Activated T-helper 1 cell treated with anti-CD3 and anti-CD28 coated beads, Interleukin-12 subunit alpha, Interleukin-12 subunit beta, Interleukin-2, Interleukin-4 antibody, amounts not matched to agents 30 ng/mL and 10 ng/mL and 1 ng/mL, durations not matched to agents 14 hours and 24 hours and 36 hours (primary cell): ENCODE measurements at regions of chr19 and their contacts with region 1.

Region 1: GRCh38 chr19:58305065-58305931 is at the start of gene ERVK3-1:
- DNase-seq: peak; percentile 95
- H3K4me3 Mint-ChIP-seq: peak within 1 kb of the TSS; percentile 97
- H3K27ac Mint-ChIP-seq: peak within 1 kb of the TSS; percentile 96
- H3K4me1 Mint-ChIP-seq: peaks cover 43% of the 10 kb centered on the region
- H3K27me3 Mint-ChIP-seq: no peaks in the 10 kb centered on the region
- total RNA-seq, gene ERVK3-1: 87.1 and 96.7 TPM in 2 replicates

Region 2: DNA sequence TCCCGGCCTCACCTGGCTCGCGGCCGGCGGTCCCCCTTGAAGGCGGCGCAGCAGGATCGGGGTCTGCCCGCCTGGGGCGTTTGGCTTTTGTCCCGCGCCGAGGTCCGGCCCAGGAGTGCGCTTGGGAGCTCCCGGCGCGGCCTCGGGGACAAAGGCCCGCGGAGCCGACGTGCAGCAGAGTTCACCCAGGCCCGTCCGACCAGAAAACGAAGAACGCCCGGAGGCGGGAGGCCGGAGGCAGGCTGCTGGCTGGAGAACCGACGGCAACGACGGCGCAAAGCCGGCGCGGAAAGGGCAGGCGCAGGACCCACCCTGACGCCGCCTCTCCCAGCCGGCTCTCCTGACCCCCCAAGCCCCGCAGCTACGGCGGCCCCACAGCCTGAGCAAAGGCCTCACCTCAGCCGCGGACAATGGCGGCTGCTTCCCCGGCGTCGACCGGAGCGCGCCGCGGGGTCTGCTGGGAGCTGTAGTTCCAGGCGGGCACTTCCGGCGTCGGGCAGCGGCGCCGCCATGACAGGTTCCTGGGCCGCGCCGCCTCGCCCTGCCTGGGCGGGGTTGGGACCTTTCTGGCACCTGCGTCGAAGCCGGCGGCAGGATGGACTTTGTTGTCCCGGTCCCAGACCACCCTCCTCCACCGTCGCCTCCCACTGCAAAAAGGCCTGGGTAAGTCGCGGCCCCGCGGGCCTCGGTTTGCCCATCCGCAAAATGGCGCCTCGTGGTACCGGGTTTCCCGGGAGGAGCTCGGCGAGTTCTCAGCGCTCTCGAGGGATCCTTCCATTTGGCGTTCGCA is 302.7 kb before region 1 on chr19 and contains the start of gene ZNF606:
- intact Hi-C with region 1: loop called (anchors 10 kb)
- DNase-seq: peak; percentile 80
- H3K4me3 Mint-ChIP-seq: peak within 1 kb of the TSS; percentile 84
- H3K27ac Mint-ChIP-seq: peak within 1 kb of the TSS; percentile 67
- H3K4me1 Mint-ChIP-seq: peaks cover 20% of the 10 kb centered on the region
- H3K27me3 Mint-ChIP-seq: no peaks in the 10 kb centered on the region
- total RNA-seq, gene ZNF606: 6.3 and 6.4 TPM in 2 replicates

Region 3: GRCh38 chr19:58326914-58327726 is 21.8 kb after region 1 on chr19 and contains the start of gene ZSCAN22:
- intact Hi-C with region 1: loop called (anchors 1 kb)
- DNase-seq: peak; percentile 88
- H3K4me3 Mint-ChIP-seq: no peak within 1 kb of the TSS
- H3K27ac Mint-ChIP-seq: no peak within 1 kb of the TSS
- H3K4me1 Mint-ChIP-seq: peaks cover 9% of the 10 kb centered on the region
- H3K27me3 Mint-ChIP-seq: no peaks in the 10 kb centered on the region
- total RNA-seq, gene ZSCAN22: 4.7 and 4.8 TPM in 2 replicates

Region 4: DNA sequence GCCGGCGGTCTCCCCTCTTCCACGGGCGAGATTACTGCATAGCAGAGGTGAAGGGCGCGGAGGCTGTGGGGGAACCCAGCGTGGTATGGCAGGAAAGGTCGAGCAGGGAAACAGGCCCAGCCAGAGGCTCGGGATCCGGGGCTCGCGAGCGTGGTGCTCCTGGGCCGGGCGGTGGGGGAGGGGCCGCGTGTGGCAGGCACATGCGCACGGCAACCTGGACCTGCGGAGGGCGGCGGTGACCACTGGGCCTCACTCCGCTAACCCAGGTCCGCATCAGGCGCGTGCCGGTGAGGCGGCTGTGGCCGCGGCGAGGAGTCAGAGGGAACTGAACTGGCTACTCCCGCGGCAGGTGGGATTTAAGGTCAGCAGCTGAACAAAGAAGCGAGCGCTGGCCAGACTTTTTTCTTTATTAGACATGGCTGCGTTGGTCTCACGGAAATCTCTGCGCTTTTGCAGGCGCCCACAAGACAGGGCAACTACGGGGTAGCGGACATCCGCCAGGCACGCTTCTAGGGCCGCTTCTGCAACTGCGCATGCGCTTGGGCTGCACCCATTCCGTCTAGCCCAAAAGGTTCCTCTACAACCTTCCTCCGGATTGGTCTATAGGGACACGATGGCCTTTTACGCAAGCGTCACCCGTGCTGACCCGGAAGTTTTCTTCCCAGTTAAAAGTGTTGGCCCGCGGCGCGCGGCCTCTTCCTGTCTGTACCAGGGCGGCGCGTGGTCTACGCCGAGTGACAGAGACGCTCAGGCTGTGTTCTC is 81.5 kb after region 1 on chr19 and contains the start of gene RPS5:
- intact Hi-C with region 1: loop called (anchors 1 kb)
- DNase-seq: peak; percentile 95
- H3K4me3 Mint-ChIP-seq: peak within 1 kb of the TSS; percentile 93
- H3K27ac Mint-ChIP-seq: peak within 1 kb of the TSS; percentile 99
- H3K4me1 Mint-ChIP-seq: peaks cover 35% of the 10 kb centered on the region
- H3K27me3 Mint-ChIP-seq: no peaks in the 10 kb centered on the region
- total RNA-seq, gene RPS5: 1,157 and 1,161 TPM in 2 replicates

Region 5: DNA sequence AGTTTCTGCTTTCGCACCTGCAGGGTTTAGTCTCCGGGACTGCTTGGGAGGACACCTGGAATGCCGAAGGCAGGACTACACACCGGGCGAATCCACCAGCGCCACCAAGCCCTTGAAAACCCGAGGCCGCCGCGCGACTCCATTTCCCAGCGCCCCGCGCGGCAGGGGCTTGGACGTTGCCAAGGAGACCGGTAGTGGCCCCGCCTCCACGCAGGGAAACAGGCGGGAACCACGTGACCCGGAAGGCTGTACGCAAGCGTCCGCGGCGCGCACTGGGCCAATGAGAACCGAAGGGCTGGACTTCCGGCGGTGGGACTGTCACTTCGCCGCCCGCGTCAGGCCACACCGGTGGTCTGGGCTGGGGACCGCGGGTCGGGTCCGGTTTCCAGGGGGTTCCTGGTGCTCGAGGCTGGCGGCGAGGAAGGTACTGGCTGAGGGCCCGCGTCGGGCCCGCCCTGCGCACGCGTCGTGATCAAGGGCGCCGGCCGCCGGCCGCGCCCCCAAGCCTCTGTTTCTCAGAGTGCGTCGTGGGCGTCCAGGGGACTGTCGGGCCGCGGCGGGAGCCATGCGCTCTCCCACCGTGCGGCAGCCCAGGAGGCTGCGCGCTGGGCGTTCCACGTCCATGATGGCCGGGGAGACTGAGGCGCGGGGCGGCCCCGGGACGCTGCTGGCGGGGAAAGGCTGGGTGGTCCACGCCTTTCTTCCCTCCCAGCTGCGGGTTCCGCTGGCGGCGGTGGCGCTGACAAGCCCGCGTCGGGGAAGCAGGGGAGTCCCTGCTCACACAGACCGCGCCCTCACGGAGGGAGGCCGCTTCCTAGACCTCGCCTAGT is 161.7 kb after region 1 on chr19 and contains the start of gene ZNF324:
- intact Hi-C with region 1: loop called (anchors 2 kb)
- DNase-seq: peak; percentile 96
- H3K4me3 Mint-ChIP-seq: peak within 1 kb of the TSS; percentile 88
- H3K27ac Mint-ChIP-seq: peak within 1 kb of the TSS; percentile 71
- H3K4me1 Mint-ChIP-seq: peaks cover 17% of the 10 kb centered on the region
- H3K27me3 Mint-ChIP-seq: no peaks in the 10 kb centered on the region
- total RNA-seq, gene ZNF324: 12.8 and 15.5 TPM in 2 replicates

Region 6: GRCh38 chr19:58572818-58573657 is 267.7 kb after region 1 on chr19 and contains the start of gene MZF1:
- intact Hi-C with region 1: loop called (anchors 1 kb)
- DNase-seq: peak; percentile 100
- H3K4me3 Mint-ChIP-seq: peak within 1 kb of the TSS; percentile 95
- H3K27ac Mint-ChIP-seq: peak within 1 kb of the TSS; percentile 99
- H3K4me1 Mint-ChIP-seq: peaks cover 41% of the 10 kb centered on the region
- H3K27me3 Mint-ChIP-seq: no peaks in the 10 kb centered on the region
- total RNA-seq, gene MZF1: 19.6 and 21.6 TPM in 2 replicates